Activated CD8-positive, alpha-beta T cell treated with anti-CD3 and anti-CD28 coated beads for 36 hours (primary cell): ENCODE measurements at regions of chr6 and their contacts with region 1.

Region 1: DNA sequence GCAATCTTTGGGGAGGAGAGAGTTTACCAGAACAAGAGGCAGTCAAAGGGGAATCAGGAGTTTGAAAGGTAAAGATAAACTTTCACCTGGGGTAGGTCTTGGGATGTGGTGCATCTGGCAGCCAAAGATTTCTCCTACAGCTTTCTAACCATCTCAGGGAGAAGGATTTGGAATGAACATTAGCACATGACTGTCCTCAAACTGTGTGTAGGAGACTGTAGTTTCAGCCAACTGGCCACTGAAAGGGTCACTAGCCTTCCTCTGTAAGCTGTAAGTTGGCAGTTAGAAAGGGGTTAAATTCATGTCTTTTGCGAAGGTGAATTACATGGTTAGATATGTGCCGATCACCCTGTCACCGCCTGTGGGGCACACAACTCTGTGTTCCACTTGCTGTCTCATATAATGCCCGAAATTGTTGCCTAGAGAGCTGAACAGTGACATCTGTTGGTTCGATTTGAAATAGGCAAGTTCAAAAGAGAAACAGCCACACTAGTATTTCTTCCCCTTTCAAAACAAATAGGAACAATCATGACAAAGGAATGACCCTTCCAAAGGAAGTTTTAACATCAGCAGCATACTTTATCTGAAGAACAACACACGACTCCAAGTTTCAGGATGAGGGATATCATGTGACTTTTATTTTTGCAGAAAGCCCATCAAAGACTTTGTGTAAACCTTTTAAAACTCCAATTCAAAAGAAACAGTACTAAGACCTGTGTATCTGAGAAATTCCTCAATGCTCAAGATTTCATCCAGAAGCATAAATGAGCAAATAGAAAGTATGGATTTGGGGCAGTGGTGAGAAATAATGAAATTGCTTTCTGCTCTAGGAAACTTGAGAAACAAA is 1.1 kb upstream of the OPN5 start:
- DNase-seq: peak; percentile 56
- ATAC-seq: peak; percentile 97
- H3K4me3 Mint-ChIP-seq: no peak overlapping the region
- H3K27ac Mint-ChIP-seq: no peak overlapping the region
- H3K4me1 Mint-ChIP-seq: peaks cover 5% of the 10 kb centered on the region
- H3K27me3 Mint-ChIP-seq: peaks cover 11% of the 10 kb centered on the region
- CTCF ChIP-seq: peak; percentile 56

Region 2: DNA sequence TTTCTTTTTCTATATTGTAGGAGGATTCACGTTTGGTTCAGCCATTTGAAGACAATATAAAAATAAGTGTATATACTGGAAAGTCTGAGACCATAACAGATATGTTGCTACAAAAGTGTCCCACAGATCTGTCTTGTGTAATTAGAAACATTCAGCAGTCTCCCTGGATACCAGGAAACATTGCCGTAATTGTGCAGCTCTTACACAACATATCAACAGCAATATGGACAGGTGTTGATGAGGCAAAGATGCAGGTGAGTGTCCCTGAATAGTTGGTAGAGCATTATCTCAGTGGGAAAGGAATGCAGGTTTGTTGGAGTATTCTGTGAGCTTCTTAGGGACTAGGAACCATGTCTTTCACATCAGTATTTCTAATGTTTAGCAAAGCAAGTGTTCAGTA is 100.7 kb before region 1 on chr6:
- CTCF ChIA-PET with region 1: no interaction called
- POLR2A ChIA-PET with region 1: no interaction called
- intact Hi-C with region 1: no loop called
- DNase-seq: no peak
- ATAC-seq: no peak
- H3K4me3 Mint-ChIP-seq: no peak overlapping the region
- H3K27ac Mint-ChIP-seq: no peak overlapping the region
- H3K4me1 Mint-ChIP-seq: no peaks in the 10 kb centered on the region
- H3K27me3 Mint-ChIP-seq: peaks cover 7% of the 10 kb centered on the region
- CTCF ChIP-seq: no peak

Region 3: DNA sequence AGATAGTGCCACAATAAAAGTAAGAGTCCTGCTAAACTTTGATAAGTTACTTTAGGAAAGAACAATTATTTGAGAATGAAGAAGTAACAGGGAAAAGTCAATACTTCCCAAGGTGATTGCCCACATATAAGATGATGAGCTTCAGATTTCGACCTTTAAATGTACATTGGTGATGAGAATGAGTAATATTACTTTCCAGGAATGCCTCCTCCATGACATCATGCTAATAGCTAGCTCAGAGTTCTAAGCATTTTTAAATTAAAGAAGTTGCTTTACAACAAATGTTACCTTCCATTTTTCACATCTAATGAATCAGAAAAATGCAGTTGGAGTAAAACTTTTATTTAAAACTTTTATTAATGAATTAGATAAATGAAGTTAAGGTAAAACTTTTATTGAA is 21.4 kb before region 1 on chr6:
- CTCF ChIA-PET with region 1: interaction called, 12 read pairs
- POLR2A ChIA-PET with region 1: no interaction called
- intact Hi-C with region 1: no loop called
- DNase-seq: no peak
- ATAC-seq: no peak
- H3K4me3 Mint-ChIP-seq: no peak overlapping the region
- H3K27ac Mint-ChIP-seq: no peak overlapping the region
- H3K4me1 Mint-ChIP-seq: peaks cover 2% of the 10 kb centered on the region
- H3K27me3 Mint-ChIP-seq: peaks cover 16% of the 10 kb centered on the region
- CTCF ChIP-seq: no peak

Region 4: DNA sequence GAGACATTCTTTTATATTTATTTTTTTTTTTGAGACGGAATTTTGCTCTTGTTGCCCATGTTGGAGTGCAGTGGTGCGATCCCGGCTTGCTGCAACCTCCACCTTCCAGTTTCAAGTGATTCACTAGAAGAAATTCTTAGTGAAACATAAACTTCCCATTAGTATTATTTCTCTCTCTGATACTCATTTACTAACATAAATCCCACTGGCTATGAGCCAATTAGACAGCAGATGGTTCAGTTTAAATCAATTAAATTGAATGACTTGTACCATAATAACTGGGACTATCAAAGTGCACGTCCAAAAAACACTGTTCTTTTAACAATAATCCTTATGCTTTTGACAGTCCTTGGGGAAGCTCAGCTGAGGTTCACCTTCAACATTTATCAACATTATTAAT is 441.5 kb after region 1 on chr6:
- CTCF ChIA-PET with region 1: no interaction called
- POLR2A ChIA-PET with region 1: no interaction called
- intact Hi-C with region 1: no loop called
- DNase-seq: no peak
- ATAC-seq: no peak
- H3K4me3 Mint-ChIP-seq: no peak overlapping the region
- H3K27ac Mint-ChIP-seq: no peak overlapping the region
- H3K4me1 Mint-ChIP-seq: no peaks in the 10 kb centered on the region
- H3K27me3 Mint-ChIP-seq: no peaks in the 10 kb centered on the region
- CTCF ChIP-seq: no peak